HEK293 (cell line): ENCODE measurements at regions of chrX and their contacts with region 1.

Region 1: GRCh38 chrX:53256446-53257041 is 24.8 kb downstream of the IQSEC2 start:
- H3K4me3 ChIP-seq: no peak overlapping the region
- H3K27ac ChIP-seq: no peak overlapping the region
- H3K4me1 ChIP-seq: no peaks in the 10 kb centered on the region
- CTCF ChIP-seq: no peak

Region 2: DNA sequence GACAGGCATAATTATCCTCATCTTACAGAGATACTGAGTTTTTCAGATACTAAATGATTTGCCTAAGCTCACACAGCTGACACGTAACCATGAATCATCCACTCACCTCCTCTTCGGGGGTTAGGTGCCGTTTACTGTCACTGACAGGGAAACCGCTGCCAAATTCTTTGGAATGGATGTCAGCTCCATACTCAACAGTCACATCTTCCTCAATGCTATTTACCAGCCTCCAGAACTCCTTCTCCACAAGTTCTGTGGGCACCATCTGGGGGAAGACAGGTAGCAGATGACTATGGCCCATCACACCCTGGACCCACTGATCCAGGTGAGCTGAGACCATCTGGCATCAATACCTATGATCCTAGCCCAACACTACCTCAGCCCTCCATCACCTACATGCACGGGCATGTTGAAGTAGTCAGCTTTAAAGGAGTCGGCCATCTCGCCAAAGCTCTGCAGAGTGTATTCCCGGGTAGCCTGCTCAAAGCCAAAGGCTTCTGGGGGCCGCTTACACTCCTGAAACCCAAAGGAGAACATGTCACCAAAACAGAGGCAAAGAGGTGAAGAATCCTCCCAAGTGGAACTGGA is 45.1 kb before region 1 on chrX:
- CTCF ChIA-PET with region 1: no interaction called
- POLR2A ChIA-PET with region 1: no interaction called
- H3K4me3 ChIP-seq: no peak overlapping the region
- H3K27ac ChIP-seq: no peak overlapping the region
- H3K4me1 ChIP-seq: no peaks in the 10 kb centered on the region
- CTCF ChIP-seq: no peak

Region 3: DNA sequence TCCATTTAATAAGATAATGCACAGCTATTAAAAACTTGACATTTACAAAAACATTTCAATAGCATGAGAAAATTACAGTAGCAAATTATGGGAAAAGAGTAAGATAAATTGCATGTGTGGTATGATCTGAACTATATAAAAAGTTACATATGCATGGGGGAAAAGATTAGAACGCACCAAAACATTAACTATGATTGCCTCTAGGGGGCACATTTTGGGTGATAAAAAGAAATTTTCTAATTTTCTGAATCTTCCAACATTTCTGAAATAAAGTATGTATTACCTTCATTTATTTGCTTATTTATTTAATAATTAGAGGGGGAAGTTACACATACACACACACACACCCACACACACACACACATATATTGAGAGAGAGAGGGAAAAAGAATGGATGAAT is 11.9 kb before region 1 on chrX:
- CTCF ChIA-PET with region 1: interaction called, 20 read pairs
- POLR2A ChIA-PET with region 1: no interaction called
- H3K4me3 ChIP-seq: no peak overlapping the region
- H3K27ac ChIP-seq: no peak overlapping the region
- H3K4me1 ChIP-seq: no peaks in the 10 kb centered on the region
- CTCF ChIP-seq: no peak

Region 4: GRCh38 chrX:53340852-53341607 is 84.5 kb after region 1 on chrX:
- CTCF ChIA-PET with region 1: no interaction called
- POLR2A ChIA-PET with region 1: no interaction called
- H3K4me3 ChIP-seq: no peak overlapping the region
- H3K27ac ChIP-seq: no peak overlapping the region
- H3K4me1 ChIP-seq: no peaks in the 10 kb centered on the region
- CTCF ChIP-seq: no peak